Dorsolateral prefrontal cortex (tissue), 120 donors: ENCODE measurements at regions of chr10 and their contacts with region 1.

Region 1: GRCh38 chr10:22325272-22326144 is 4.6 kb downstream of the BMI1 start:
- DNase-seq: peak in 8 of 10 donors; percentile 40 to 78 (median 64)
- H3K4me3 ChIP-seq: peak overlapping the region; percentile 49 to 92 (median 72)
- H3K27ac ChIP-seq: peak overlapping the region; percentile 13 to 94 (median 81)
- H3K27me3 ChIP-seq: no peaks in the 10 kb centered on the region
- CTCF ChIP-seq: peak in 7 of 56 donors; percentile 5 to 21 (median 10)

Region 2: DNA sequence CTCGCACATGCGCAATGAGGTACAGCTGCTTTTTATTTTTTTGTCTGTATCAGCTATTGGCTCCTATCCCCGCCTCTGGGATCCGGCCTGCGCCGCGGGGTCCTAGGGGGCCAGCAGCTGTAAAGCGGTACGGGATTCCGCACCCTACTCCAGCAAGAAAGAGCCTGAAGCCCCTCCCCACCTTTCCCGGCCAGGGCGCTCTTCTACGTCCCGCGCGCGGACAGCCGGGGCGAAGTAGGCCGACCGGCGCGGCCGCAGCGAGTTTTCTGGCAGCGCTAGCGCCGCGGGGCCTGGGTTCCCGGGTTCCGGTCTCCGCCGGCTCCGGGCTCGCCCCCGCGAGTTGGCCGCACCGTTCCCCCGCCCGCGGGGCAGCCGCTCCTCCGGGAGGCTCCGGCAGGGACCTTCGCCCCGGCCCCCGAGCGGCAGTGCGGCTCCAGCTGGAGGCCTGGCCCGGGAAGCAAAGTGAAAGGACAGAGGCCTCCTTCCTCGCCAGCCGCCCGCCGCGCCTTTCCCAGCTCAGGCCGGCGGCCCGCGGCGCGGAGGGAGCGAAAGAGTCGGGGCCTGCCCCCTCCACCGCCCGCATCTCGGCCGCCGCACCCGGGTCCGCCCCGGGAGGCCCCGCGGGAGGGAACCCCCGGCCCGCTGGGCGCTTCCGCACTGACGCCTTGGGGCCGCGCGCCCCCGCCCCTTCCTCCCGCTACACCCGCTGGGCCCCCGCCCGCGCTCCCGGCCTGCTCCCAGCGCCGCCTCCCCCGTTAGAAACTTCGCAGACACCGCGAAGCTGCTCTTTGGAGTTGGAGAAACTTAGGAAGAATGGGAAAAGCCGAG is 15.1 kb after region 1 on chr10:
- intact Hi-C with region 1: loop called in 1 of 2 experiments (anchors 2 kb)
- DNase-seq: peak in 8 of 10 donors; percentile 34 to 72 (median 52)
- H3K4me3 ChIP-seq: peak overlapping the region; percentile 62 to 91 (median 80)
- H3K27ac ChIP-seq: peak overlapping the region; percentile 83 to 99 (median 95)
- H3K27me3 ChIP-seq: peaks cover 6 to 95% (median 69%) of the 10 kb centered on the region in 45 donors
- CTCF ChIP-seq: peak in 12 of 56 donors; percentile 1 to 34 (median 8)

Region 3: GRCh38 chr10:22550732-22551131 is 225.2 kb after region 1 on chr10:
- intact Hi-C with region 1: loop called in 1 of 2 experiments (anchors 10 kb)
- DNase-seq: peak in 5 of 10 donors; percentile 8 to 58 (median 54)
- H3K4me3 ChIP-seq: no peak overlapping the region
- H3K27ac ChIP-seq: peak overlapping the region in 26 of 59 donors; percentile 1 to 93 (median 38)
- H3K27me3 ChIP-seq: no peaks in the 10 kb centered on the region
- CTCF ChIP-seq: peak in 55 of 56 donors; percentile 30 to 71 (median 55)